Panc1 (cell line): ENCODE measurements at regions of chr1 and their contacts with region 1.

Region 1: DNA sequence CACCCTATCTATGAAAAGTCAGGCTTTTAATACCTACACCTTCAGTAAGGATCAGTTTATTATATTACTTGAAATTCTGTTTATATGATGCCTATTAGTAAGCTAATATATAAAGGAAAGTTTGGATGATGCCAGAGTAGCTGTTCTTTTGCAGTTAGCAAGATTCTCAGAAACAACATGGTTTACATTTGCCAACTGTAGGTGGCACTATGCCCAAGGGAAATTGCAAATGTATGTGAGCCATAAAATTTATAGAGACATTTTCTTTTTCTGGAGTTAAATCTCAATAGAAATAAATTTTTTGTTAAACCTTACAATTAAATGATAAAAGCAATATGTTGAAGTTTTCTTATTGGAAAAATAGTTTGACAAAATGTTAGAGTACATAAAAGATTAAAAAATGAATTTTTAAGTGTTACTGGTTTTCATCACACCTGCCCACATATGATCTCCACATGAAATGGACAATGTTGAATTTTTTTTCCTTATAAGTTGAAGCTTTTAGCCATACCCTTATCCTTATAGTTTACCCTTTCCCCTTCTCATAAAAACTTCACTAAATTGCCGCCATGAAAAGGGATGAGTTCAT is 32.1 kb upstream of the EPHX4 start:
- DNase-seq: peak; percentile 22
- ATAC-seq: no peak
- H3K4me3 ChIP-seq: no peak overlapping the region
- H3K27ac ChIP-seq: no peak overlapping the region
- H3K4me1 ChIP-seq: no peaks in the 10 kb centered on the region
- H3K27me3 ChIP-seq: no peaks in the 10 kb centered on the region
- CTCF ChIP-seq: peak; percentile 61; the same call in 1 of the 2 replicates

Region 2: DNA sequence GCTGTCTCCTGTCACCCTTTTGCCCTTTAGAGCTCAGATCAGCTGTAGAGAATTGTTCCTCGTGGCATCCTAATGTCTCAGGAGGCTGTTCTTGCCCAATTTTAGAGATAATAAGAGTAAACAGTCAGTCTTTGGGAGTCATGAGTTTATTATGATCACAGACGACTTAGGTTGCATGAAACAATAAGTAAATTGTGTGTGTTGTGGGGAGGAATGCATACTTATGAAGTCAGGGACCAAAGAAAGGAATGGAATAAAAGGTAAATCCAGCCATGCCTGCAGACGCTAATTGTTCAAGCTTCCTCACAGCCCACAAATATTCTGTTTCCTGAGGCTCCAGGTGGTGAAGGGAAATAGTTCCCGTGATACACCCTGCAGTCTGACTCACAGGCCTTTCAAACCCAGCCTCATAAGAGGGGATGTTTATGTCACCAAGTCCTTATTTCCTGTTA is 33.0 kb after region 1 on chr1:
- CTCF ChIA-PET with region 1: no interaction called
- POLR2A ChIA-PET with region 1: no interaction called
- in situ Hi-C with region 1: no loop called
- intact Hi-C with region 1: no loop called
- DNase-seq: no peak
- ATAC-seq: no peak
- H3K4me3 ChIP-seq: no peak overlapping the region
- H3K27ac ChIP-seq: no peak overlapping the region
- H3K4me1 ChIP-seq: no peaks in the 10 kb centered on the region
- H3K27me3 ChIP-seq: no peaks in the 10 kb centered on the region; the same call in 1 of the 2 replicates
- CTCF ChIP-seq: no peak

Region 3: GRCh38 chr1:92291372-92291999 is 293.8 kb after region 1 on chr1:
- CTCF ChIA-PET with region 1: interaction called, 6 read pairs
- POLR2A ChIA-PET with region 1: interaction called, 8 read pairs
- in situ Hi-C with region 1: no loop called
- intact Hi-C with region 1: loop called (anchors 5 kb)
- DNase-seq: no peak
- ATAC-seq: peak; percentile 60; the same call in 1 of the 2 replicates
- H3K4me3 ChIP-seq: no peak overlapping the region
- H3K27ac ChIP-seq: no peak overlapping the region
- H3K4me1 ChIP-seq: no peaks in the 10 kb centered on the region
- H3K27me3 ChIP-seq: no peaks in the 10 kb centered on the region
- CTCF ChIP-seq: peak; percentile 59; the same call in 1 of the 2 replicates